ENCODE measurements at regions of chr5 and their contacts with region 1.

Region 1: DNA sequence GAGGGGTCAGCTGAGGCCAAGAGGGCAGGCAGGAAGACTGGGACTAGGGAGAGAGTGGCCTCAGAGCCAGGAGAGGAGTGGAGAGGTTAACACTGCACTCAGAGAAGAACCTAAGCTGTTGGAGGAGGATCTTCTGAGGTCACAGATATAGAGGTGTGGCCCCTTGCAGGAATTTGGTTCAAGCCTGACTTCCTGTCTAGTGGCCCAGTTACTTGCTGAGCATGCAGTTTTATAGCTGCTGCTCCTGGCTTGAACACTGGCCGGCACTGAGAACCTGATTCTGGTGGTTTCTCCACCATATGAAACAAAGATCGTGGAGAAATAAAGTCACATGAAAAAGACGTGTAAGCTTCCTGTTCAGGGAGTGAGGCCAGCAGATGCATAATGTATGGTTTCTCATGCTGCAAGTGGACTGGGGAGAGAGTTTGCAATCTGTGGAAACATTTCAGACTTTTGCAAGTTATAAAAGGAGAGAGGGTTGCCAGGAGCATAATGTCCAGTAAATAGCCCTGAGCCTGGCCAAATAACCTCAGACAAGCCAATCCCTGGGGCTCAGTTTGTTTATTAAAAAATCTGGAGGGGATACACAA is 82.6 kb downstream of the GALNT10 start:
- DNase-seq: peak; percentile 21
- ATAC-seq: no peak
- H3K4me3 ChIP-seq: no peak overlapping the region
- H3K27ac ChIP-seq: no peak overlapping the region
- H3K4me1 ChIP-seq: peaks cover 27% of the 10 kb centered on the region
- H3K27me3 ChIP-seq: no peaks in the 10 kb centered on the region
- CTCF ChIP-seq: no peak
- POLR2A ChIP-seq: no peak
- RAD21 ChIP-seq: no peak

Region 2: DNA sequence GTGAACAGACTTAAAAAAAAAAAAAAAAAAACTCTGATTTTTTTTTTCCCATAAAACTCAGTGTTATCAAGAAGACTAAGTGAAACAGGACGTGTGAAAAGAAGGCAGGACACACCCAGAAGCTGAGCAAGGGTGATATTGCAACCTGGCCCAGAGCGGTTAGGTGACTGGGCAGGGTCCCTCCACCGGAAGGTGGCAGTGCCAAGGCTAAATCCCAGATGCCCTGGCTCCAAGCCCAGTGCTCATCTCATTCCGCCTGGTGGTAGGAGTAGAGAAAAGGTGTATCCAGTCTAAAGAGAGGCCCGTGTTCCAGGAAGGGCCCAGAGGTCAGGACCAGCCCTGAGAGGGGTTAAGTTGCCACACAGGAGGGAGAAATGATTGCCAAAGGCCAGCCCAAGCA is 121.2 kb after region 1 on chr5:
- CTCF ChIA-PET with region 1: no interaction called
- POLR2A ChIA-PET with region 1: no interaction called
- dilution Hi-C with region 1: no loop called
- in situ Hi-C with region 1: no loop called
- intact Hi-C with region 1: loop called (anchors 5 kb)
- DNase-seq: no peak
- ATAC-seq: no peak
- H3K4me3 ChIP-seq: no peak overlapping the region
- H3K27ac ChIP-seq: no peak overlapping the region
- H3K4me1 ChIP-seq: no peaks in the 10 kb centered on the region
- H3K27me3 ChIP-seq: no peaks in the 10 kb centered on the region
- CTCF ChIP-seq: no peak
- POLR2A ChIP-seq: no peak
- RAD21 ChIP-seq: no peak

Region 3: DNA sequence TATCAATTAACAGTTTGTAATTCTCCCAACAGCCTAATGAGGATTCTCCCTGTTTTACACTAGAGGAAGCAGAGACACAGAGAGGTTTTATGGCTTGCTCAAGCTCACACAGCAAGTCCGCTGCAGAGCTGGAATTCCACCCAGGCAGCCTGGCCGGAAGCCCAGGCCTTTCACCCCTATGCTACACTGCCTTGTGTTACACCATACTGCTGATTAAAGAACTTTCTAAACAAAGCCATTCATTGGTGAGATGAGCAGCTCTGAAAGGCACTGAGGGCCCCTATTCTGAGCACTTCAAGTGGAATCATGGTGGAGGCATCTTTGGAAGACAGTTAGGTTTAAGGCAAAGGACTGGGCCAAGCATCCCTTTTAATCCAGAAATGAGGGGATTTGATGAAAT is 467.4 kb after region 1 on chr5:
- CTCF ChIA-PET with region 1: no interaction called
- POLR2A ChIA-PET with region 1: no interaction called
- dilution Hi-C with region 1: no loop called
- in situ Hi-C with region 1: no loop called
- intact Hi-C with region 1: loop called (anchors 5 kb)
- DNase-seq: peak; percentile 82
- ATAC-seq: peak; percentile 94
- H3K4me3 ChIP-seq: no peak overlapping the region
- H3K27ac ChIP-seq: no peak overlapping the region
- H3K4me1 ChIP-seq: peaks cover 7% of the 10 kb centered on the region; the same call in 1 of the 2 replicates
- H3K27me3 ChIP-seq: no peaks in the 10 kb centered on the region
- CTCF ChIP-seq: no peak
- POLR2A ChIP-seq: no peak
- RAD21 ChIP-seq: no peak

Measured in IMR-90 (cell line).